BJ (cell line): ENCODE measurements at regions of chr1 and their contacts with region 1.

Region 1: DNA sequence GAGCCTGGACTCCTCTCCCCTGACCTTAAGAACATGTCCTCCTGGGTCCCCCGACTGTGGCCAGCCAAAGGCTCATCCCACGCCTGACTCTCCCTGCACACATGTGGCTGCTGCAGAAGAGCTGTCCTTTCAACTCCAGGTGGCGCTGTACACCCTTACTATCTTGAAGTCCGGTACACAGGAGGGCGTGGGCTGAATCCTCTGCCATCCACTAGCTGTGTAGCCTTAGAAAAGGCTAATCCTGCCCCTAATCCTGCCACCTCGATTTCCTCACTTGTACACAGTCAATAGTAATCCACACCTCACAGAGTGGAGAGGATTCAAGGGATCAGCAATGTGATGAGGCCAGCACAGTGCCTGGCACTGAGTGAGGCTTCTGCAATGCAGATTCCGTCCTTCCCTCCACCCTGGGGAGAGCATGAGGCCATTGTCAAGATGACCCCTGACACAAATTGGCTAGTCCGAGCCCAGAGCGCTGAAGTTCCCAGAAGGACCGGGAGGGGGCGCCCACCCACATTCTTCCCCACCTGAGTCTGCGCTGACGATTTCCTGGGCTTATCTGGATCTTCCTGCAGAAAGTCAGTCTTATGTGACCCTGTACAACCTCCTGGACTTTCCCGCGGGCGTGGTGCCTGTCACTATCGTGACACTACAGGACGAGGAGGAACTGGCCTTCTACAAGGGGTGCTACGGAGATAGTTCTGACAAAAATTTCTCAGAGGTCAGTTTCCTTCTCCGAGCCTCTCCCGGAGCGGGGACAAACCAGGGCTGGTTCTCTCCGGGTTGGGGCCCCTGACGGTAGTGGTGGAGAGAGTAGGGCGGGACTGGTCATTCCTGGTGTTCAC is 47.1 kb upstream of the DMBX1 start:
- DNase-seq: no peak
- H3K4me3 ChIP-seq: peak overlapping the region; percentile 41
- H3K27me3 ChIP-seq: peaks cover 10% of the 10 kb centered on the region
- CTCF ChIP-seq: peak; percentile 93

Region 2: GRCh38 chr1:46315669-46316403 is 126.7 kb before region 1 on chr1:
- CTCF ChIA-PET with region 1: no interaction called
- POLR2A ChIA-PET with region 1: no interaction called
- DNase-seq: no peak
- H3K4me3 ChIP-seq: no peak overlapping the region
- H3K27me3 ChIP-seq: no peaks in the 10 kb centered on the region
- CTCF ChIP-seq: no peak

Region 3: GRCh38 chr1:46379996-46380395 is 62.5 kb before region 1 on chr1:
- CTCF ChIA-PET with region 1: no interaction called
- POLR2A ChIA-PET with region 1: no interaction called
- DNase-seq: no peak
- H3K4me3 ChIP-seq: no peak overlapping the region
- H3K27me3 ChIP-seq: no peaks in the 10 kb centered on the region
- CTCF ChIP-seq: no peak

Region 4: GRCh38 chr1:46431691-46432090 is 10.8 kb before region 1 on chr1:
- CTCF ChIA-PET with region 1: interaction called, 44 read pairs
- POLR2A ChIA-PET with region 1: no interaction called
- DNase-seq: no peak
- H3K4me3 ChIP-seq: no peak overlapping the region
- H3K27me3 ChIP-seq: peaks cover 7% of the 10 kb centered on the region
- CTCF ChIP-seq: no peak

Region 5: GRCh38 chr1:46461809-46462448 is 19.4 kb after region 1 on chr1:
- CTCF ChIA-PET with region 1: interaction called, 16 read pairs
- POLR2A ChIA-PET with region 1: no interaction called
- DNase-seq: no peak
- H3K4me3 ChIP-seq: no peak overlapping the region
- H3K27me3 ChIP-seq: peaks cover 22% of the 10 kb centered on the region
- CTCF ChIP-seq: no peak

Region 6: GRCh38 chr1:46522184-46522968 is 79.8 kb after region 1 on chr1:
- CTCF ChIA-PET with region 1: interaction called, 139 read pairs
- POLR2A ChIA-PET with region 1: no interaction called
- DNase-seq: no peak
- H3K4me3 ChIP-seq: no peak overlapping the region
- H3K27me3 ChIP-seq: peaks cover 18% of the 10 kb centered on the region
- CTCF ChIP-seq: no peak

Region 7: GRCh38 chr1:46533179-46533864 is 90.8 kb after region 1 on chr1:
- CTCF ChIA-PET with region 1: interaction called, 139 read pairs
- POLR2A ChIA-PET with region 1: no interaction called
- DNase-seq: no peak
- H3K4me3 ChIP-seq: peak overlapping the region; percentile 23; the same call in 1 of the 2 replicates
- H3K27me3 ChIP-seq: peaks cover 24% of the 10 kb centered on the region
- CTCF ChIP-seq: no peak

Region 8: GRCh38 chr1:46556822-46557221 is 114.3 kb after region 1 on chr1:
- CTCF ChIA-PET with region 1: no interaction called
- POLR2A ChIA-PET with region 1: no interaction called
- DNase-seq: peak; percentile 22
- H3K4me3 ChIP-seq: no peak overlapping the region
- H3K27me3 ChIP-seq: peaks cover 1% of the 10 kb centered on the region; the same call in 1 of the 2 replicates
- CTCF ChIP-seq: peak; percentile 8; the same call in 1 of the 2 replicates